CD4-positive, alpha-beta memory T cell (primary cell): ENCODE measurements at regions of chr5 and their contacts with region 1.

Region 1: DNA sequence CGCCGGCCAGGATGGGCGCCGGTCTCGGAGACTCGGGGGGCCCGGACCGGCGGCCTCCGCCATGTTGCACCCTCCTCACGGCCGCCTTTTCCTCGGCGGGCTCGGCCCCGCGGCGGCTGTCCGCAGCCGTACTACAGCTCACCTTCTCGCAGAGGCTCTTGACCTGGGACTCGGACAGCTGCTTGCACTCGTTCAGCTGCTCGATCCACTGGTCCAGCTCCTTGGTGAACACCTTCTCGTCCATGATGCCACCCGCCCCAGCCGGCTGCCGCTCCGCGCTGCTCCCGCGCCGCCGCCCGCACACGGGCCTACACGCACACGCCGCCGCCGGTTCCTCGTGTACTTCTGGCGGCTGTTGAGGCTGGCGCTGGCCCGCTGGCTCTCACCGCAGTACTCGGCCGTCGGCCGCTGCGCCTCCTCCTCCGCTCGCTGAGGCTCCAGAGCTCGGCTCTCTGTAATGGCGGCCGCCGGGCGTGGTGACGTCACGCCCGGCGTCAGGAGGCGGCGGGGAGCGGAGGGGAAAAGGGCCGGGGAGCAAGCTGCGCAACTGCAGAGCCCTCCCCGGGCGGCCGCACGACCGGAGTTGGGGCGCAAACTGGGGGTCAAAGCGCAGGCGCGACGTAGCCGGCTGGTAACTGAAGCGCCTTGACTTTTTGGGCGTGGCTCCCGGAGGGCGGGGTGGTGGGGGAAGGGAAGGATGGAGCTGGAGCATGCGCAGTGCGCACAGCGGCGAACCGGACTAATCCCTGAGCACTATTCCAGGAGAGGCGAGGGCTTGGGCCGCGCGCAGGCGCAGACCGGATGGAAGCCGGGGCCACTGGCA is at the start of gene PPP2CA:
- DNase-seq: peak; percentile 99 to 100 (median 99)
- H3K4me3 ChIP-seq: peak within 1 kb of the TSS; percentile 87
- H3K4me3 Mint-ChIP-seq: peak within 1 kb of the TSS; percentile 77 to 99 (median 97)
- H3K27ac ChIP-seq: peak within 1 kb of the TSS; percentile 100
- H3K27ac Mint-ChIP-seq: peak within 1 kb of the TSS; percentile 98 to 100 (median 99)
- H3K4me1 ChIP-seq: peaks cover 51% of the 10 kb centered on the region
- H3K4me1 Mint-ChIP-seq: peaks cover 40 to 66% (median 48%) of the 10 kb centered on the region in 4 donors
- H3K27me3 ChIP-seq: no peaks in the 10 kb centered on the region
- H3K27me3 Mint-ChIP-seq: no peaks in the 10 kb centered on the region
- total RNA-seq, gene PPP2CA: 106 to 108 TPM

Region 2: DNA sequence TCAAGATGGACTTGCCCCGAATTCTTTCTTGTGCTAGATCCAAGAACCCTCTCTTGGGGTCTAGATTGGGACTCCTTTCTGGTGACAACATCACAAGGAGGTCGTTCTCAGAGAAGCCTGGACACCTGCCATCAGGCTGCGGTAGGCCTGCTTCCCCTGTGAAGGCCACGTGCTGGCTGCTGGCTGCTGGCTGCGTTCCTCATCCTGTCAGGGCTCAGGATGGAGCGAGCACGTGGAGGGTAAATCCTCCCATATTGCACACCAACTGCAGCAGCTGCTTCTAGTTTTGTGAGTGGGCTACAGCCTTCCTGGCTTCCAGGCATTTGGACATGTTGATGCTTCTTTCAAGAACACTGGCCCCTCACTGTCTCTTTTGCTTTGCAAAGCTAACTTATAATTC is 1078.4 kb before region 1 on chr5:
- CTCF ChIA-PET with region 1: no interaction called
- POLR2A ChIA-PET with region 1: no interaction called
- intact Hi-C with region 1: no loop called
- DNase-seq: no peak
- H3K4me3 ChIP-seq: no peak overlapping the region
- H3K4me3 Mint-ChIP-seq: no peak overlapping the region
- H3K27ac ChIP-seq: no peak overlapping the region
- H3K27ac Mint-ChIP-seq: no peak overlapping the region
- H3K4me1 ChIP-seq: peaks cover 15% of the 10 kb centered on the region
- H3K4me1 Mint-ChIP-seq: peaks cover 11 to 19% (median 17%) of the 10 kb centered on the region in 4 donors
- H3K27me3 ChIP-seq: no peaks in the 10 kb centered on the region
- H3K27me3 Mint-ChIP-seq: peaks cover 5 to 7% of the 10 kb centered on the region in 2 donors

Region 3: DNA sequence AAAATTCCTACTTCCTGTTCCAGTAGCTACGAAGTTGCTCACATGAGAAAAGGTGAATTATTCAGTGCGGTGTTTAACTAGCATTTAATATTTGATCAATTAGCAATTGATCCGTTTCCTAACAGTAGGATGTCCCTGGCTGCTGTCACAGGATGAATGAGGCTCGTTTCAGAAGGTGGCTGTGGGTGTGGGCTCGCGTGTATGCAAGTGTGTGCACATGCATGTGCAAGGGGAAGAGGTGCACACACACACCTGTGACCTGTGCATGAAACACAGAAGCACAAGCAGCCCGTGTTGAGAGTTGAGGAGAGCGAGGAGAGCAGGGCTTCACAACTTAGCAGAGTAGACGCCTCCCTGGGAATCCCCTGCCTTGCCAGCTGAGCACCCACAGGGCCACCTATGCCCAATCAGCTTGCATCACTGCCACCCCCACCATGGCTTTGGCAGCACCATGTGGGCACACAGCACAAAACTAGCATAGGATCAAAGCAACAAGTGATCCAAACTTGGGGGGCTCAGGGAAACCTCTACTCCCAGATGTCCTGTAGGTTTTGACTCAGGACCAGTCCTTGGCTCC is 364.6 kb before region 1 on chr5:
- CTCF ChIA-PET with region 1: no interaction called
- POLR2A ChIA-PET with region 1: no interaction called
- intact Hi-C with region 1: no loop called
- DNase-seq: no peak
- H3K4me3 ChIP-seq: no peak overlapping the region
- H3K4me3 Mint-ChIP-seq: no peak overlapping the region
- H3K27ac ChIP-seq: no peak overlapping the region
- H3K27ac Mint-ChIP-seq: peak overlapping the region in 1 of 7 donors; percentile 10
- H3K4me1 ChIP-seq: no peaks in the 10 kb centered on the region
- H3K4me1 Mint-ChIP-seq: peaks cover 0 to 2% (median 0%) of the 10 kb centered on the region in 4 donors
- H3K27me3 ChIP-seq: no peaks in the 10 kb centered on the region
- H3K27me3 Mint-ChIP-seq: peaks cover 5 to 11% of the 10 kb centered on the region in 2 donors

Region 4: GRCh38 chr5:134004592-134005375 is 221.0 kb before region 1 on chr5 and contains the start of gene VDAC1:
- CTCF ChIA-PET with region 1: no interaction called
- POLR2A ChIA-PET with region 1: interaction called, 19 read pairs
- intact Hi-C with region 1: loop called (anchors 1 kb)
- DNase-seq: peak; percentile 89 to 95 (median 92)
- H3K4me3 ChIP-seq: peak within 1 kb of the TSS; percentile 61 to 81
- H3K4me3 Mint-ChIP-seq: peak within 1 kb of the TSS; percentile 89 to 99 (median 93)
- H3K27ac ChIP-seq: peak within 1 kb of the TSS; percentile 96
- H3K27ac Mint-ChIP-seq: peak within 1 kb of the TSS; percentile 96 to 99 (median 98)
- H3K4me1 ChIP-seq: peaks cover 49% of the 10 kb centered on the region
- H3K4me1 Mint-ChIP-seq: peaks cover 26 to 50% (median 38%) of the 10 kb centered on the region in 4 donors
- H3K27me3 ChIP-seq: no peaks in the 10 kb centered on the region
- H3K27me3 Mint-ChIP-seq: no peaks in the 10 kb centered on the region
- total RNA-seq, gene VDAC1: 45.1 to 46.4 TPM

Region 5: DNA sequence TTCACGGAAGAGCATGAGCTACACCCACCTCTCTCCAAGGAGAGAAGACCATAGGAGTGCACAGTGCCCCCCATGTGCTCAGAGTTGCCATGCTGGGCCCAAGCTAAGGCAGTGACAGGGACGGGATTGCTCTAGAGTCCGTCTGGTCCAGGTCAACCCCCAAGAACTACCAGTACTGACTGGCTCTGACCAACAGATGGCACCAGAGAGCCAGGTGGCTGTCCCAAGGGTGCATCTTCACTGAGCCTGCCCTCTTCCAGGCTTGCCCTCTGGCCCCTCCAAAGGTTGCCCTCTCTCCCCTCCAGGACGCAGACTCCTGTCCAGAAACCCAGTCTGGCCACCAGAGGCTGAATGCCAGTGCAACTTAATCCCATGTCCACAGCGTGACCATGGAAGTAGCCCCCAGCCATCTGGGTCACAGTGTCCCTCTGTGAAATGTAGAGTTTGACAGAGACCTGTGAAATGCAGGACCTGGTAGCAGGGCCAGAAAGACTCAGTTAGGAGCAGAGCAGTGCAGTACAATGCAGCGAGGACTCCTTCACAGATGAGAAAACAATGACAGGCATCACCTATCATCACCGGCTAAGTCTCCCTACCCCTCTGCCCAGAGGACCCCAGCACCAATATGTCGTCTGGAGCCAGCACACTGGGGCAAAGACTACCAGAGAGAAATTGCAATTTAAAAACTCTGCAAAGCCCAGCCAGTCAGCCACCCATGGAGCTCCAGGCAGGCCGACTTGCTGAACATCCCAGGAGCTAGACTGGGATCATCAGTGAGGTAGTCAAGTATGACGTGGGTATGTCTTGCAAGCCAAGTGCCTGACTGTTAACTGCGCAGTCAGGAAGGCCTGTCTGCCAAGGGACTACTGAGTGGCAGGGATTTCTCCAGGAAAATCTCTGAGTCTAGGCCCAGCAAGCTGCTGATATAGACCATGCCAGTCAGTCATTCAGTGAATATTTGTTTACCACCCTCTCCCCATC is 41.4 kb before region 1 on chr5:
- CTCF ChIA-PET with region 1: interaction called, 13 read pairs
- POLR2A ChIA-PET with region 1: interaction called, 119 read pairs
- intact Hi-C with region 1: no loop called
- DNase-seq: peak; percentile 72 to 79 (median 74)
- H3K4me3 ChIP-seq: no peak overlapping the region
- H3K4me3 Mint-ChIP-seq: no peak overlapping the region
- H3K27ac ChIP-seq: no peak overlapping the region
- H3K27ac Mint-ChIP-seq: peak overlapping the region in 3 of 7 donors; percentile 21 to 63 (median 50)
- H3K4me1 ChIP-seq: no peaks in the 10 kb centered on the region
- H3K4me1 Mint-ChIP-seq: peaks cover 0 to 3% (median 1%) of the 10 kb centered on the region in 4 donors
- H3K27me3 ChIP-seq: no peaks in the 10 kb centered on the region
- H3K27me3 Mint-ChIP-seq: no peaks in the 10 kb centered on the region

Region 6: GRCh38 chr5:134281081-134281480 is 55.3 kb after region 1 on chr5:
- CTCF ChIA-PET with region 1: no interaction called
- POLR2A ChIA-PET with region 1: interaction called, 13 read pairs
- intact Hi-C with region 1: no loop called
- DNase-seq: no peak
- H3K4me3 ChIP-seq: no peak overlapping the region
- H3K4me3 Mint-ChIP-seq: peak overlapping the region in 2 of 8 donors; percentile 22 to 23
- H3K27ac ChIP-seq: no peak overlapping the region
- H3K27ac Mint-ChIP-seq: peak overlapping the region in 4 of 7 donors; percentile 81 to 91 (median 85)
- H3K4me1 ChIP-seq: peaks cover 8% of the 10 kb centered on the region
- H3K4me1 Mint-ChIP-seq: peaks cover 5 to 12% (median 7%) of the 10 kb centered on the region in 4 donors
- H3K27me3 ChIP-seq: no peaks in the 10 kb centered on the region
- H3K27me3 Mint-ChIP-seq: peaks cover 3 to 12% of the 10 kb centered on the region in 2 donors

Region 7: DNA sequence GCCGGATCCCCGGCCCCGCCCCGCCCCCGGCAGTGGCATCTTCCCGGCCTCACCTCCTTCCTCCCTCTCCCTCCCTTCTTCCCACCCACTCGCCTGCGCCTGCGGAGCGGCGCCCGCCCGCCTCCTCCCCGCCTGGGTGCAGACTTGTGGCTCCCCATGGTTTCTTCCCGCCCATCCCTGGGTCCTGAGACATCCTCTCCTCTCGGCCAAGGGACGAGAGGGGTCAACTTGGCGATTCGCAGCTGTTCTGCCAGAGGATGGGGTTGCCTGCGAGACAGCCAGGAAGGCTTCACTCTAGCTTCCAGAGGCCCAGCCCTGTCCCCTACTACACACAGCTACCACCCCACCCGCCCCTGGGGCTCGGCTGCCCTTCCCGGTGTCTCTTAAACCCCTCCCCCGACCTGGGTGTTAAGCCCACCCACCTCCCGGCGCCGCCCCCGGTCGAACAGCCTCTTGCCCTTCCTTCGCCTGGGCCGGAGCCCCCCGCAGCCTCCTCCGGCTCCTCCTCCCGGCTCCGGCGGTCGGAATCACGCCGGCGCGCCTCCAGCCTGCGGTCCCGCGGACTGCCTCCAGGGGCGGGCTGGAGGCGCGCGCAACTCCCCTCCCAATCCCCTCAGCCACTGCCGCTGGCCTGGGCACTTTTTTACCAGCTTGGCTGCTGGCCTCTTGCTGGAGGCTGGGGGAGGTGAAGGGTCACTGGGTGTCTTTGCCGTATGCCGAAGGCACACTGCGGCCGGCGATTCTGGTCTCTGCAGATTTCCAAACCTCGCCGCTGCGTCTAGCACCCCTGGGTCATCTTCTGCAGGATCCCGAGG is 301.5 kb after region 1 on chr5:
- CTCF ChIA-PET with region 1: no interaction called
- POLR2A ChIA-PET with region 1: interaction called, 36 read pairs
- intact Hi-C with region 1: loop called (anchors 1 kb)
- DNase-seq: peak; percentile 58 to 73 (median 62)
- H3K4me3 ChIP-seq: peak overlapping the region; percentile 77 to 80
- H3K4me3 Mint-ChIP-seq: peak overlapping the region; percentile 94 to 98 (median 97)
- H3K27ac ChIP-seq: peak overlapping the region; percentile 96
- H3K27ac Mint-ChIP-seq: peak overlapping the region; percentile 82 to 99 (median 92)
- H3K4me1 ChIP-seq: peaks cover 60% of the 10 kb centered on the region
- H3K4me1 Mint-ChIP-seq: peaks cover 40 to 80% (median 49%) of the 10 kb centered on the region in 4 donors
- H3K27me3 ChIP-seq: no peaks in the 10 kb centered on the region
- H3K27me3 Mint-ChIP-seq: peaks cover 0 to 2% of the 10 kb centered on the region in 2 donors

Region 8: GRCh38 chr5:134738133-134738962 is 512.5 kb after region 1 on chr5 and contains the start of gene CAMLG:
- CTCF ChIA-PET with region 1: interaction called, 4 read pairs
- POLR2A ChIA-PET with region 1: interaction called, 9 read pairs
- intact Hi-C with region 1: loop called (anchors 1 kb)
- DNase-seq: peak; percentile 96 to 97 (median 97)
- H3K4me3 ChIP-seq: peak within 1 kb of the TSS; percentile 87 to 97
- H3K4me3 Mint-ChIP-seq: peak within 1 kb of the TSS; percentile 88 to 98 (median 94)
- H3K27ac ChIP-seq: peak within 1 kb of the TSS; percentile 86
- H3K27ac Mint-ChIP-seq: peak within 1 kb of the TSS; percentile 85 to 99 (median 97)
- H3K4me1 ChIP-seq: peaks cover 18% of the 10 kb centered on the region
- H3K4me1 Mint-ChIP-seq: peaks cover 14 to 31% (median 21%) of the 10 kb centered on the region in 4 donors
- H3K27me3 ChIP-seq: no peaks in the 10 kb centered on the region
- H3K27me3 Mint-ChIP-seq: no peaks in the 10 kb centered on the region
- total RNA-seq, gene CAMLG: 26.7 to 33.8 TPM